Activated CD4-positive, alpha-beta memory T cell treated with anti-CD3 and anti-CD28 coated beads, Interleukin-2, amount 10 ng/mL, durations not matched to agents 7 days and 5 days (primary cell): ENCODE measurements at regions of chr22 and their contacts with region 1.

Region 1: GRCh38 chr22:46367707-46368191 is 32.2 kb downstream of the TRMU start:
- DNase-seq: peak; percentile 70
- H3K4me3 Mint-ChIP-seq: no peak overlapping the region
- H3K27ac Mint-ChIP-seq: no peak overlapping the region
- H3K4me1 Mint-ChIP-seq: peaks cover 18% of the 10 kb centered on the region
- H3K27me3 Mint-ChIP-seq: peaks cover under 1% of the 10 kb centered on the region

Region 2: GRCh38 chr22:46542011-46542985 is 174.5 kb after region 1 on chr22:
- CTCF ChIA-PET with region 1: interaction called, 38 read pairs
- POLR2A ChIA-PET with region 1: interaction called, 3 read pairs
- DNase-seq: peak; percentile 69
- H3K4me3 Mint-ChIP-seq: no peak overlapping the region
- H3K27ac Mint-ChIP-seq: no peak overlapping the region
- H3K4me1 Mint-ChIP-seq: peaks cover 5% of the 10 kb centered on the region
- H3K27me3 Mint-ChIP-seq: peaks cover 31% of the 10 kb centered on the region